Heart right ventricle (tissue), 16 donors: ENCODE measurements at regions of chr18 and their contacts with region 1.

Region 1: DNA sequence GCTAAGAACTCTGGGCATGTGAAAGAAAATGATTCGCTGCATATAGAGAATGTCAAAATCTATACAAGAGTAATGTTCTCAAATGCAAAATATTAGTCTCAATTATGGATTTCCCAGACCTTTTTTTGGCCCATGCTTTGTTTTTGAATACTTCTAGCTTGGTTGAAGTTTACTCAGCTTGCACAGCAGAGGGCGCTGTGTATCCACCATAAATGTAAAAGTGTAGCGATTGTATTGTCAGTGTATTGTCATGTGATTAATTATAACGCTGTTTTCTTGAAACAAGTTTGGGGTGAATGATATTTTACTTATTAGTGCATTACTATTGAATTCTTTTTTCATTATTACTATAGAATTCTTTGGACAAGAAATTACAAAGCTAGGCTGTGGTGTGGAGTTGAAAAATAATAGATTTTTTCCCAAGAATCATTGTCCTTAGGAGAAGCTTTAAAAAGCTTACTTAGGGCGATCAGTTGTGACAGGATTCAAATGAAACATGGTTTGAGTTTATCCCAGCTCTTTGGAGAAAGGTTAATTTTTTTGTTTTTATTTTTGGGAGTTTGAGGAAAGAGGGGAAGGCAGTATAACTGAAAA is 98.3 kb downstream of the PIK3C3 start:
- DNase-seq: peak; percentile 24 to 45
- ATAC-seq: peak in 5 of 8 donors; percentile 60 to 72 (median 64)
- H3K4me3 ChIP-seq: peak overlapping the region in 1 of 10 donors; percentile 0
- H3K27ac ChIP-seq: no peak overlapping the region
- H3K4me1 ChIP-seq: peaks cover 0 to 11% (median 0%) of the 10 kb centered on the region in 9 donors
- H3K27me3 ChIP-seq: no peaks in the 10 kb centered on the region
- CTCF ChIP-seq: peak; percentile 64 to 90 (median 86)

Region 2: GRCh38 chr18:41809652-41810051 is 243.6 kb before region 1 on chr18:
- intact Hi-C with region 1: no loop called
- DNase-seq: no peak
- ATAC-seq: no peak
- H3K4me3 ChIP-seq: no peak overlapping the region
- H3K27ac ChIP-seq: no peak overlapping the region
- H3K4me1 ChIP-seq: no peaks in the 10 kb centered on the region
- H3K27me3 ChIP-seq: peaks cover 0 to 9% (median 0%) of the 10 kb centered on the region in 7 donors
- CTCF ChIP-seq: no peak

Region 3: GRCh38 chr18:41992066-41992465 is 61.2 kb before region 1 on chr18:
- intact Hi-C with region 1: loop called in 1 of 10 experiments (anchors 10 kb)
- DNase-seq: no peak
- ATAC-seq: no peak
- H3K4me3 ChIP-seq: no peak overlapping the region
- H3K27ac ChIP-seq: no peak overlapping the region
- H3K4me1 ChIP-seq: no peaks in the 10 kb centered on the region
- H3K27me3 ChIP-seq: no peaks in the 10 kb centered on the region
- CTCF ChIP-seq: no peak

Region 4: DNA sequence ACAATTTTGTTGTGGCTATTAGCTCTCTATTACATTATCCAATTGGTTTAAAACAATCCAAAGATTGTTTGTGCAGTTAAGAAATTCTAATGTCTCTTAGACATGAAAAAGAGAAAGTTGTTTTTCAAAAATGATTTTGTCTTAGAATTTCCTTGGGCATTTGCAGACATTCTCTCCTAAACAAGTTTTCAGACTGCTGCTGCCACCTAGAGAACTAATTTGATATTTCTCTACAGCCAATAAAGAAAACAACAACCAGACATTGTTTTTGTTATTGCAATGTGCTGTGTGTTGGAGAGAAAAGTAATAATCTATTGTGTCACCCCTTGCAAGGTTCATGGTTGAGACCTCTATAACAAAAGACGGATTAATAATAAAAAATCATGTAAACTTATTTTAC is 1343.0 kb after region 1 on chr18:
- intact Hi-C with region 1: loop called in 1 of 10 experiments (anchors 10 kb)
- DNase-seq: no peak
- ATAC-seq: no peak
- H3K4me3 ChIP-seq: no peak overlapping the region
- H3K27ac ChIP-seq: no peak overlapping the region
- H3K4me1 ChIP-seq: no peaks in the 10 kb centered on the region
- H3K27me3 ChIP-seq: no peaks in the 10 kb centered on the region
- CTCF ChIP-seq: peak in 7 of 9 donors; percentile 29 to 56 (median 42)

Region 5: DNA sequence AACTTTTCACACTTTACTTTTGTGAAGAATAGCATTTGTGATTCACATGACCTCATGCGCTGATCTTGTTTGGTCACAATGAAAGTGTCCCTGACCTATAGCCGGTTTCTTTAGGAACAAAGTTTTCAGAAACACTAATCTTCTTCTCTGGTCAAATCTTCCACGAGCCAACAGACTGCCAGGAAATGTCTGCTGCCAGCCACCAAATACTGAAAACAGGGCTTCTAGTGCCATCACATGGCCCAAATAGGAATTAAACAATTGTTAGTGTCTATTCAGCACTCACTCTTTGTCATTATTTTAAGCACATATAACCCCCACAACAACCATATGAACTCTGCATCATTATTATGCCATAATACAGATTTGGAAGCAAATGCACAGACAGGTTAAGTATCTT is 1510.5 kb after region 1 on chr18:
- intact Hi-C with region 1: loop called in 6 of 10 experiments (anchors 5 to 10 kb)
- DNase-seq: peak in 1 of 2 donors; percentile 11
- ATAC-seq: peak in 2 of 8 donors; percentile 42 to 70
- H3K4me3 ChIP-seq: no peak overlapping the region
- H3K27ac ChIP-seq: no peak overlapping the region
- H3K4me1 ChIP-seq: peaks cover 0 to 5% (median 0%) of the 10 kb centered on the region in 9 donors
- H3K27me3 ChIP-seq: peaks cover 0 to 16% (median 0%) of the 10 kb centered on the region in 7 donors
- CTCF ChIP-seq: peak in 8 of 9 donors; percentile 25 to 61 (median 48)

Region 6: DNA sequence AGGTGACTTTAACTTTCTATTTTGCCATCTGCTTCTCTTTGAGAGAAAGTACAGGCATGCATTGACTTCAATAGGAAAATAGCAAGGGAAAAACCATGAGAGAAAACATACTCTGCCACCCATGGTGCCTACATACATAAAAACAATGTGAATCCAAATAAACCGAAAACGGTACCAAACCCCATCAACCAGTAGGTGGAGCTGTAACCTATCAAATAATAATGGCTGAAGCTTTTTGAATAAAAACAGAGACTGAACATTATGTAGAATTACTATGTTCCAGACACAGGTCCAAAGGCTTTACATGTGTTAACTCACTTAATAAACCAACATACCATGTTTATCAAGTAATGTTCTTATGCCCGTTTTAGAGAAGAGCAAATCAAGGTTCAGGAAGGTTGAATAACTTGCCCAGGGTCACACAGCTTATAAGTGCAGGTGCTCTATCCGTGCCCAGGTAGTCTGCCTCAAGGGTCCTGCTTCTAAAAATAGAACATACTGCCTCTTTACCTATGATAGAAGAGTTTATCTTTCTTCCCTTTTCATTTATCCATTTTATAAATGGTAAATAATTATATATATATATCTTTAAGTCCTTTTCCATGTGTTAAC is 1517.9 kb after region 1 on chr18:
- intact Hi-C with region 1: loop called in 4 of 10 experiments (anchors 5 to 10 kb)
- DNase-seq: peak in 1 of 2 donors; percentile 12
- ATAC-seq: no peak
- H3K4me3 ChIP-seq: no peak overlapping the region
- H3K27ac ChIP-seq: no peak overlapping the region
- H3K4me1 ChIP-seq: no peaks in the 10 kb centered on the region
- H3K27me3 ChIP-seq: peaks cover 0 to 7% (median 0%) of the 10 kb centered on the region in 7 donors
- CTCF ChIP-seq: peak; percentile 32 to 80 (median 72)